Naive thymus-derived CD4-positive, alpha-beta T cell (primary cell): ENCODE measurements at regions of chr19 and their contacts with region 1.

Region 1: GRCh38 chr19:55476100-55476775 is at the start of gene ZNF628:
- DNase-seq: peak; percentile 88 to 98 (median 96)
- ATAC-seq: peak; percentile 96
- H3K4me3 ChIP-seq: peak within 1 kb of the TSS; percentile 96
- H3K4me3 Mint-ChIP-seq: peak within 1 kb of the TSS; percentile 83 to 93 (median 90)
- H3K27ac ChIP-seq: peak within 1 kb of the TSS; percentile 90
- H3K27ac Mint-ChIP-seq: peak within 1 kb of the TSS; percentile 81 to 95 (median 92)
- H3K4me1 ChIP-seq: peaks cover 14 to 15% of the 10 kb centered on the region in 2 donors
- H3K4me1 Mint-ChIP-seq: peaks cover 15 to 41% (median 29%) of the 10 kb centered on the region in 7 donors
- H3K27me3 ChIP-seq: no peaks in the 10 kb centered on the region
- H3K27me3 Mint-ChIP-seq: no peaks in the 10 kb centered on the region
- total RNA-seq, gene ZNF628: 6.6 to 27.2 (median 9.0) TPM

Region 2: GRCh38 chr19:54102421-54103169 is 1373.6 kb before region 1 on chr19 and contains the start of gene NDUFA3:
- CTCF ChIA-PET with region 1: no interaction called
- POLR2A ChIA-PET with region 1: no interaction called
- intact Hi-C with region 1: loop called in 1 of 2 experiments (anchors 1 kb)
- DNase-seq: peak; percentile 95 to 99 (median 97)
- ATAC-seq: peak; percentile 99
- H3K4me3 ChIP-seq: peak within 1 kb of the TSS; percentile 72
- H3K4me3 Mint-ChIP-seq: peak within 1 kb of the TSS; percentile 87 to 99 (median 98)
- H3K27ac ChIP-seq: peak within 1 kb of the TSS; percentile 77
- H3K27ac Mint-ChIP-seq: peak within 1 kb of the TSS; percentile 85 to 98 (median 94)
- H3K4me1 ChIP-seq: peaks cover 0 to 6% of the 10 kb centered on the region in 2 donors
- H3K4me1 Mint-ChIP-seq: peaks cover 5 to 40% (median 24%) of the 10 kb centered on the region in 7 donors
- H3K27me3 ChIP-seq: no peaks in the 10 kb centered on the region
- H3K27me3 Mint-ChIP-seq: peaks cover 0 to 6% (median 0%) of the 10 kb centered on the region in 5 donors
- total RNA-seq, gene NDUFA3: 64.4 to 127 (median 117) TPM

Region 3: GRCh38 chr19:54463531-54464043 is 1012.7 kb before region 1 on chr19 and contains the start of gene LENG9:
- CTCF ChIA-PET with region 1: no interaction called
- POLR2A ChIA-PET with region 1: no interaction called
- intact Hi-C with region 1: loop called in 1 of 2 experiments (anchors 5 kb)
- DNase-seq: peak; percentile 73 to 97 (median 87)
- ATAC-seq: peak; percentile 81
- H3K4me3 ChIP-seq: peak within 1 kb of the TSS; percentile 88
- H3K4me3 Mint-ChIP-seq: peak within 1 kb of the TSS; percentile 84 to 95 (median 92)
- H3K27ac ChIP-seq: peak within 1 kb of the TSS; percentile 71
- H3K27ac Mint-ChIP-seq: peak within 1 kb of the TSS; percentile 86 to 98 (median 93)
- H3K4me1 ChIP-seq: peaks cover 17 to 23% of the 10 kb centered on the region in 2 donors
- H3K4me1 Mint-ChIP-seq: peaks cover 16 to 35% (median 33%) of the 10 kb centered on the region in 7 donors
- H3K27me3 ChIP-seq: peaks cover 0 to 3% of the 10 kb centered on the region in 2 donors
- H3K27me3 Mint-ChIP-seq: peaks cover 5 to 23% (median 7%) of the 10 kb centered on the region in 5 donors
- total RNA-seq, gene LENG9: 3.5 to 6.1 (median 4.3) TPM

Region 4: GRCh38 chr19:54481322-54481930 is 994.8 kb before region 1 on chr19:
- CTCF ChIA-PET with region 1: no interaction called
- POLR2A ChIA-PET with region 1: no interaction called
- intact Hi-C with region 1: no loop called
- DNase-seq: peak in 6 of 9 donors; percentile 20 to 53 (median 43)
- ATAC-seq: peak; percentile 71
- H3K4me3 ChIP-seq: no peak overlapping the region
- H3K4me3 Mint-ChIP-seq: peak overlapping the region in 1 of 10 donors; percentile 32
- H3K27ac ChIP-seq: no peak overlapping the region
- H3K27ac Mint-ChIP-seq: no peak overlapping the region
- H3K4me1 ChIP-seq: peaks cover 0 to 5% of the 10 kb centered on the region in 2 donors
- H3K4me1 Mint-ChIP-seq: peaks cover 4 to 18% (median 6%) of the 10 kb centered on the region in 7 donors
- H3K27me3 ChIP-seq: no peaks in the 10 kb centered on the region
- H3K27me3 Mint-ChIP-seq: peaks cover 38 to 55% (median 45%) of the 10 kb centered on the region in 5 donors

Region 5: GRCh38 chr19:55178781-55179599 is 297.2 kb before region 1 on chr19:
- CTCF ChIA-PET with region 1: no interaction called
- POLR2A ChIA-PET with region 1: no interaction called
- intact Hi-C with region 1: loop called in 1 of 2 experiments (anchors 1 kb)
- DNase-seq: peak; percentile 87 to 98 (median 92)
- ATAC-seq: peak; percentile 93
- H3K4me3 ChIP-seq: peak overlapping the region; percentile 64
- H3K4me3 Mint-ChIP-seq: peak overlapping the region; percentile 49 to 85 (median 82)
- H3K27ac ChIP-seq: peak overlapping the region; percentile 41
- H3K27ac Mint-ChIP-seq: peak overlapping the region; percentile 38 to 94 (median 86)
- H3K4me1 ChIP-seq: peaks cover 15 to 32% of the 10 kb centered on the region in 2 donors
- H3K4me1 Mint-ChIP-seq: peaks cover 9 to 36% (median 26%) of the 10 kb centered on the region in 7 donors
- H3K27me3 ChIP-seq: peaks cover 13 to 50% of the 10 kb centered on the region in 2 donors
- H3K27me3 Mint-ChIP-seq: peaks cover 63 to 79% (median 67%) of the 10 kb centered on the region in 5 donors

Region 6: DNA sequence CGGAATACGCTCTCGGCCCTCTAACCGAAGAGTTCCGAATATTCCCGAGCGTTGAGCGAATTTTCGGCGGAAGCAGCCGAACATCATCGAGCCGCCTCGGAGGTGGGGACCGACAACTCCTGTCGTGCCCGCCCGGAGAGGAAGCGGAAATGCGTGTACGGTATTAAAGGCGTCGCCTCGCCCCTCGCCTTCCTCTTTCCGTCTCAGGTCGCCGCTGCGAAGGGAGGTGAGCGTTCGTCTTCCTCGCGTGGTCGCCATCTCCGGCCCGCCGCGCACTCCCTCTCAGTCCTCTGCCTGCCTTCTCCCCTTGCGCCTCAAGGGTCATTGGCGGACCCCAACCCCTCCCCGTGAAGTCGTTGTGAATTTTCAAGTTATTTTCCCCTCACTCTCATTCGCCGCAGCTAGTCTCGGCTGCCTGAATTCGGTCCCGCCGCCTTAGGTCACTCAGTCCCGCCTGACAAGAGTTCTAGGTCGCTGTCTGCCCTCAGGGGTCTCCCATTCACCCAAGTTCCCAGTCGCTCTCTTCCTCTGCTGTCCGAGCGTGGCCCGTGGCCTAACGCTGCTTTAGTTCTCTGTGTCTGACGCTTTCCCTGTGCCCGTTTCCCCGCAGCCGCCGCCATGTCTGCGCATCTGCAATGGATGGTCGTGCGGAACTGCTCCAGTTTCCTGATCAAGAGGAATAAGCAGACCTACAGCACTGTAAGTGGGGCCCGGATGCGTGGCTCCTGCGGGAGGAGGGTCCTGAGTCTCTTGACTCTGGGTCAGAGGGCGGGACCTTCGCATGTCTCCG is 90.3 kb before region 1 on chr19 and contains the start of gene RPL28:
- CTCF ChIA-PET with region 1: no interaction called
- POLR2A ChIA-PET with region 1: interaction called, 5 read pairs
- intact Hi-C with region 1: loop called (anchors 1 kb)
- DNase-seq: peak; percentile 92 to 99 (median 99)
- ATAC-seq: peak; percentile 89
- H3K4me3 ChIP-seq: peak within 1 kb of the TSS; percentile 92
- H3K4me3 Mint-ChIP-seq: peak within 1 kb of the TSS; percentile 94 to 100 (median 100)
- H3K27ac ChIP-seq: peak within 1 kb of the TSS; percentile 91
- H3K27ac Mint-ChIP-seq: peak within 1 kb of the TSS; percentile 91 to 100 (median 99)
- H3K4me1 ChIP-seq: peaks cover 45 to 53% of the 10 kb centered on the region in 2 donors
- H3K4me1 Mint-ChIP-seq: peaks cover 41 to 79% (median 70%) of the 10 kb centered on the region in 7 donors
- H3K27me3 ChIP-seq: no peaks in the 10 kb centered on the region
- H3K27me3 Mint-ChIP-seq: peaks cover 0 to 3% (median 0%) of the 10 kb centered on the region in 5 donors
- total RNA-seq, gene RPL28: 2,549 to 3,799 (median 3,242) TPM

Region 7: GRCh38 chr19:55437410-55438075 is 38.7 kb before region 1 on chr19:
- CTCF ChIA-PET with region 1: no interaction called
- POLR2A ChIA-PET with region 1: no interaction called
- intact Hi-C with region 1: no loop called
- DNase-seq: peak in 1 of 9 donors; percentile 48
- ATAC-seq: peak; percentile 47
- H3K4me3 ChIP-seq: no peak overlapping the region
- H3K4me3 Mint-ChIP-seq: no peak overlapping the region
- H3K27ac ChIP-seq: no peak overlapping the region
- H3K27ac Mint-ChIP-seq: no peak overlapping the region
- H3K4me1 ChIP-seq: peaks cover 7 to 23% of the 10 kb centered on the region in 2 donors
- H3K4me1 Mint-ChIP-seq: peaks cover 9 to 22% (median 19%) of the 10 kb centered on the region in 7 donors
- H3K27me3 ChIP-seq: peaks cover 8 to 33% of the 10 kb centered on the region in 2 donors
- H3K27me3 Mint-ChIP-seq: peaks cover 41 to 50% (median 44%) of the 10 kb centered on the region in 5 donors

Region 8: GRCh38 chr19:55461259-55461973 is 14.8 kb before region 1 on chr19 and contains the start of gene ISOC2:
- CTCF ChIA-PET with region 1: interaction called, 3 read pairs
- POLR2A ChIA-PET with region 1: interaction called, 29 read pairs
- intact Hi-C with region 1: loop called (anchors 1 kb)
- DNase-seq: peak; percentile 99 to 100 (median 100)
- ATAC-seq: peak; percentile 98
- H3K4me3 ChIP-seq: peak within 1 kb of the TSS; percentile 91
- H3K4me3 Mint-ChIP-seq: peak within 1 kb of the TSS; percentile 86 to 99 (median 92)
- H3K27ac ChIP-seq: peak within 1 kb of the TSS; percentile 79
- H3K27ac Mint-ChIP-seq: peak within 1 kb of the TSS; percentile 68 to 94 (median 90)
- H3K4me1 ChIP-seq: peaks cover 4 to 12% of the 10 kb centered on the region in 2 donors
- H3K4me1 Mint-ChIP-seq: peaks cover 14 to 33% (median 20%) of the 10 kb centered on the region in 7 donors
- H3K27me3 ChIP-seq: no peaks in the 10 kb centered on the region
- H3K27me3 Mint-ChIP-seq: peaks cover 0 to 2% (median 0%) of the 10 kb centered on the region in 5 donors
- total RNA-seq, gene ISOC2: 5.1 to 20.1 (median 11.3) TPM

Region 9: DNA sequence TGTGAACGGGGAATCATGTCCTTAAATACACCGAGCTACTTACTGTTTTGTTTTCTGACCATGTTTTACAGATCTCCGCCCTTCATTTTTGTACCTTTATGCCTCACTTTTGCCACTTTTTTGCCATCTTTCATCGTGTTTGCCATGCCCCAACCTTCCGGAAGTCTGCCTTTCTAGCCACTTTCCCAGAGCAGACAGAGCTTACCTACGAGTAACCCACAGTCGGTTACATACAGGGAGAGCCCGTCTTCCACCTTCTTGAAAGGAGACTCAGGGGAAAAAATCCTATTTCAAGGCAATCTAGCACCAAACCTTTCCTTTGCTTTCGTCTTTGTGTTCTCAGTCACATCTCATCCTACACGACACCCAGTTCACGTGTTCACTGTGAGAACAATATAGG is 318.8 kb after region 1 on chr19:
- CTCF ChIA-PET with region 1: no interaction called
- POLR2A ChIA-PET with region 1: no interaction called
- intact Hi-C with region 1: no loop called
- DNase-seq: no peak
- ATAC-seq: no peak
- H3K4me3 ChIP-seq: no peak overlapping the region
- H3K4me3 Mint-ChIP-seq: no peak overlapping the region
- H3K27ac ChIP-seq: no peak overlapping the region
- H3K27ac Mint-ChIP-seq: no peak overlapping the region
- H3K4me1 ChIP-seq: no peaks in the 10 kb centered on the region
- H3K4me1 Mint-ChIP-seq: no peaks in the 10 kb centered on the region
- H3K27me3 ChIP-seq: no peaks in the 10 kb centered on the region
- H3K27me3 Mint-ChIP-seq: peaks cover 0 to 29% (median 23%) of the 10 kb centered on the region in 5 donors